Left ventricle myocardium superior (tissue), 1 donor: ENCODE measurements at regions of chr17 and their contacts with region 1.

Region 1: GRCh38 chr17:27654654-27655524 is 23.9 kb downstream of the LGALS9 start:
- DNase-seq: peak; percentile 76
- ATAC-seq: peak; percentile 48

Region 2: GRCh38 chr17:27473748-27474609 is 180.9 kb before region 1 on chr17:
- intact Hi-C with region 1: no loop called
- DNase-seq: peak; percentile 80
- ATAC-seq: peak; percentile 78

Region 3: DNA sequence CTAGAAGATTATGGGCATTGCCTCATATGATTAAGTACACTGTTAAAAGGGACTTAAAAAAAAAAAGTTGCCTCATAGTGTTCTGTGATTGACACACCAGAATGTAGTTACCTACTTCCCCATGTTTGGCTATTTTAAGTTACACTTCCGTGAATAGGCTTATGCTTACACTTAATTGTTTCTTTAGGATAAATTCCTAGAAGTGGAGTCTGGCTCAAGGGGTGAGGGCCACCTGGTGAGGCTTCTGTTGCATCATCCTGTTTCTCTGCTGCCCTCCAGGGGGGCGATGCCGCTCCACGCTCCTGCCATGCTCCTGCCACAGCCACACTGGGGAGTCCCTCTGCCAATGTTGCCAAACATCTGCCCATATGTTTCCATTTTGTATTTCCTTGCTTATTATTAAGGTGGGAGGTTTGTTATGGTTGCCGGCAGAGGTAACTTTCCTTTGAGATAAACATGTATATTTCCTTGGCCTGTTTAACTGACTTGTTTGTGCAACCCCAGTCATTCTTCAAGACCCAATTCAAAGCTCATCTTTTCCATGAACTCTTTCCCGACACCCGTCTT is 125.6 kb before region 1 on chr17:
- intact Hi-C with region 1: no loop called
- DNase-seq: no peak
- ATAC-seq: peak; percentile 20

Region 4: GRCh38 chr17:27601069-27601975 is 53.6 kb before region 1 on chr17:
- intact Hi-C with region 1: loop called (anchors 5 kb)
- DNase-seq: peak; percentile 83
- ATAC-seq: peak; percentile 58

Region 5: DNA sequence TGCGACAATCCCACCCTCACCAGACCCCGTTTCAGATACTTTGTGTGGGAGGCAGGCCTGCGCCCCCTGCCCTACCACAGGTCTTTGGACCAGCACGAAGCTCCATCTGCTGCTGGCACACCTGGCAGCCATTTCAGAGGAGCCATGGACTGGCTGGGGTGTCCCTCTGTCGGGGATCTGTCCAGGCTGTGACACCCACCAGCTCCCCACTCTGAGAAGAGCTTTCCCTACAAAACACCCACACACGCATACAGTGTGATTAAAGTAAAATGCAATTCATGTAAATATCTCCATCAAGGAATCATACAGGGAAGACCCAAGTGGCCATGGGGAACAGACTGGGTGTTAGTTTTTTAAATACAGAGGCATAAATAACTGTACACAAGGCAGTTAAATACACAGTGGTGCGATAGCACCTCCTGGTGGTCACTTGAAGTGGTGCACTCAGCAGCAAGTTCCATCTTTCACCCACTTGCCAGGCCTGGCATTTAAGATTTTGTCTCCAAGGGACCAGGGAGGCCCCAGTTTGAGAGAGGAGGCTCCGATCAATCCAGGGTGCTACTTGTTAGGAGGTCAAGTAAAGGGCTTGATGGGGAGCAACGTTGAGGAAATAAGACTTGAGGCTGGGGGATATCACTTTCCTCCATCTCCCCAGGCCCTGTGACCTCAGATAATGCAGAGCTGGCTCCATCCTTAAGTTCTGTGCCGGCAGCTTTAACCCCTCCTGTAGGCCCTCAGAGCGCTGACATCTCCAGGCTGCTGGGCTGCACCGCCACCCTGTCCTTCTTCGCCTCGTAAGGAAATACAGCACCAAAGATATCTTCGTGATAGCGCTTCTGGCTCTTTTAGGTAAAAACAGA is 101.9 kb after region 1 on chr17:
- intact Hi-C with region 1: loop called (anchors 10 kb)
- DNase-seq: peak; percentile 52
- ATAC-seq: no peak

Region 6: DNA sequence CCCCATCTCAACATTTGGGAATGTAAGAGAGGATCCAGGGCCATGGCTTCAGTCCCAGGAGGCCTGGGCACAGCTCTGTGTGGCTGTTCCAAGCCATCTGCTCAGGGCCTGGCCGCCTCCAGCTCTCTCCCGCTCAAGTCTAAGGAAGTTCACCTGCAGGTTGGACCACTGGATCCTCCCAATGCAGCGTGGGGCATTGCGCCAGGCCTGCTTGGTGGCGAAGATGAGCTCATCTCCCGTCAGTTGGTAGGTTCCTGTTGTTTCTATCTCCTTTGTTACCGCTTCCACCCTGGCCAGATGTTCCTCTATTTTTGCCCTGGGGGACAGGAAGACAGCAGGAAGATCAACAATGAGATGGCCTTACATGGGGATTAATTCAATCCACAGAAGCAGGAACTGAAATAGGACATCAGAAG is 127.9 kb after region 1 on chr17:
- intact Hi-C with region 1: no loop called
- DNase-seq: peak; percentile 64
- ATAC-seq: peak; percentile 55